ENCODE measurements at regions of chr1 and their contacts with region 1.

Region 1: DNA sequence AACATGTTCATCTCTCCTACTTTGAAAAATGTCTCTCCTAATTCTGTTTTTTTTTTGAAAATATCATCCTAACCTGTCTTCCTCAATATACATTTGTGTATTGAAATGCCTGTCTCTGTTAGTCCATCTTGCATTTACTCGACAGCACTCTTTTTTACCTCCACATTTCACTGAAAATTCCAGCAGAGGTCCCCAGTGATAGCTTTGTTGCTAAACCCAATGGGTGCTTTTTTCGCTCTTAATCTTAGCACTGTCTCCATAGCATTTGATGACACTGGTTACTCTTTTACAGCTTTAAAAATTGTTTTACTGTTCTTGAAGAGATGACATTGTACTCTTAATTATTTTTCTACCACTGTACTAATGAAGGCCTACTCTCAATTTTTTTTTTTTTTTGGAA is 10.8 kb downstream of the OSBPL9 start:
- DNase-seq: no peak
- ATAC-seq: peak; percentile 50

Region 2: GRCh38 chr1:51719146-51719545 is 91.5 kb after region 1 on chr1:
- intact Hi-C with region 1: no loop called
- DNase-seq: no peak
- ATAC-seq: no peak

Region 3: GRCh38 chr1:51729824-51730301 is 102.2 kb after region 1 on chr1:
- intact Hi-C with region 1: loop called (anchors 10 kb)
- DNase-seq: no peak
- ATAC-seq: peak; percentile 47

Region 4: DNA sequence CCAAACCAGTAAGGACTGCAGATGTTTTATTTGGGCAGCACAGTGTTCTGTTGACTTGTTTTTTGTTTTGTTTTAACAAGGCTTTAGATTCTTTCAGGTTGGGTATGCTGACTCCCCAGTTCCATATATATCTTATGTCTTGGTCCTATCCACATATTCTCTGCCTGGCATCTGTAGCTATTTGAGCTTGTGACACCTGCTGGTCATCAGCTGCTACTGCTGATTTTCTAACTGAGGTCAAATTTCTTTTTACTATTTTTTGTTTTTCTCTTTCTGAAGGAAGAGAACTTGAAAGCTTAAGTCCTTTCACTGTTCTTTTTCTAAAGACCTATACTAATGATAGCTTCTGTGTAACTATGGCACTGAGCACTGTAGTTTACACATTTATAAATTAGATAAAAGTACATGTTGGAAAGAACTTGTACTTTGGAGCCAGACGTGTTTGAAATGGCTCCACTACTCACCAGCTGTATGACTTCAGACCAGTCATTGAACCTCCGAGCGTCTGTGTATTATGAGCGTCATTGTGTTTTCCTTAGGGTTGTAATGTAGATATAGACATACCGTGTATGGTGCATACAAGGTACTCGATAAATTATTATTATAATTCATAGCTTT is 141.4 kb after region 1 on chr1:
- intact Hi-C with region 1: loop called (anchors 10 kb)
- DNase-seq: no peak
- ATAC-seq: peak; percentile 80